Activated CD8-positive, alpha-beta T cell treated with anti-CD3 and anti-CD28 coated beads, Interleukin-2, amount 10 ng/mL, durations not matched to agents 7 days and 5 days (primary cell): ENCODE measurements at regions of chr17 and their contacts with region 1.

Region 1: GRCh38 chr17:37373530-37374159 is 2.1 kb upstream of the C17orf78 start:
- DNase-seq: peak; percentile 84
- ATAC-seq: peak; percentile 96
- H3K4me3 Mint-ChIP-seq: no peak overlapping the region
- H3K27ac Mint-ChIP-seq: no peak overlapping the region
- H3K4me1 Mint-ChIP-seq: peaks cover 12% of the 10 kb centered on the region
- H3K27me3 Mint-ChIP-seq: no peaks in the 10 kb centered on the region

Region 2: GRCh38 chr17:37255432-37255831 is 118.2 kb before region 1 on chr17:
- CTCF ChIA-PET with region 1: interaction called, 10 read pairs
- POLR2A ChIA-PET with region 1: no interaction called
- DNase-seq: no peak
- ATAC-seq: no peak
- H3K4me3 Mint-ChIP-seq: no peak overlapping the region
- H3K27ac Mint-ChIP-seq: no peak overlapping the region
- H3K4me1 Mint-ChIP-seq: no peaks in the 10 kb centered on the region
- H3K27me3 Mint-ChIP-seq: no peaks in the 10 kb centered on the region

Region 3: DNA sequence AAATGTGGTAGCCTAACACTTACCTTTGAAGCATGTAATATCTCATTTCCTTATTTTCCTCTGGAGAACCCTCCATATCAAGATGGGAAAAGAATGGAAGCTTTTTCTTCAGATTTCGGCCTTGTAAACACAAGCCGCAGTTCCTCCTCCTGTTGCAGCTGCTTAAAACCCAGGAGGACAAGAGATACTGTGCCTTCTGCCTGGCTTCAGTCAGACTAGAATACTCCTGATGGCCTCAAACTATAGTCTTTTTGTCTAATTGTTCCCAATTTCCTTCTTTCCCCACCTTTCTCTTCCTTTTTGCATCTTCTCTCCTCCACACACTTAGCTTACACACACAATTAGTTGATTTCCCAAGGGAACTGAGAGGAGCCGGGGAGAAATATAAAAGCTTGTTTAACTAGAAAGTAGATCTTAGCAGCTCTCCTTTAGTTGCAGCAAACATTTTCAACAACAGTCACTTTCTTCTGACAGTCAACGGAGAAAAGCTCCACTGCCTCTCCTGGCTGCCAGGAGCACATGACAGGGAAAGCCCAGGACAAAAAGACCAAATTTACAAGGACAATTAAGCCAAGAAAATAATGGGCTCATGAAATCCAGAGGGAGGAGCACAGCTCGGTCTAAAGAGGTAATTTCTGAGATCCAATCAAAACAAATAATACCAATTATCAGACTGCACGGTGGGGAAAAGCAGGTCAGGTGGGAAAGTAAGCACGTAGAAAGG is 74.2 kb before region 1 on chr17:
- CTCF ChIA-PET with region 1: no interaction called
- POLR2A ChIA-PET with region 1: no interaction called
- DNase-seq: no peak
- ATAC-seq: no peak
- H3K4me3 Mint-ChIP-seq: no peak overlapping the region
- H3K27ac Mint-ChIP-seq: no peak overlapping the region
- H3K4me1 Mint-ChIP-seq: peaks cover 9% of the 10 kb centered on the region
- H3K27me3 Mint-ChIP-seq: no peaks in the 10 kb centered on the region

Region 4: DNA sequence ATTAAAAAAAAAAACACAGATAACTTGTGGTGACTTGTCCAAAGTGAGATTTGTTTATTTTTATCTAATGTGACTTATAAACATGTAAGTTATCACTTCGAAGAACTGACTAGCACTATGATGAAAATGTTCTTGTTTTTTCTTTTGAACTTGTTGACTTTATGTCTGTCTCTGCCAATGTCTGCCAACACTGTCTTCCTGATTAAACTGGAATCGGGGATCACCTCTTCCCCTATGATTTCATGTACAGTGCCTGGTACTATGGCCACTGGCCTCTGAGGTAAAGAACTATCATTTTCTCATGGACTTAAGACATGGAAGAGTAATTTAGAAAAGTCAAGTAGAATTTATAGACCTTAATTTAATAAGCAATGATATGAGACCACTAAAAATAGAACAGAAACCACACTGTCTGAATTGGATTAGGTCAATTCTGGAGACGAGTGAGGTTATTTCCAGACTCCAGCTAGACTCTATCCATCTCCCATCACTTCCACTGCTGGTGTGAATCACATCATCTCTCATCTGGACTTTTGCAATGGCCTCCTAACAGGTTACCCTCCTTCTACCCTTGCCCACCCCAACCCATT is 11.0 kb after region 1 on chr17:
- CTCF ChIA-PET with region 1: interaction called, 85 read pairs
- POLR2A ChIA-PET with region 1: no interaction called
- DNase-seq: no peak
- ATAC-seq: no peak
- H3K4me3 Mint-ChIP-seq: no peak overlapping the region
- H3K27ac Mint-ChIP-seq: no peak overlapping the region
- H3K4me1 Mint-ChIP-seq: no peaks in the 10 kb centered on the region
- H3K27me3 Mint-ChIP-seq: no peaks in the 10 kb centered on the region

Region 5: GRCh38 chr17:37406635-37407461 is 33.2 kb after region 1 on chr17 and contains the starts of genes ACACA and TADA2A:
- CTCF ChIA-PET with region 1: interaction called, 22 read pairs
- POLR2A ChIA-PET with region 1: interaction called, 3 read pairs
- DNase-seq: peak; percentile 83
- ATAC-seq: peak; percentile 98
- H3K4me3 Mint-ChIP-seq: peak within 1 kb of the TSS; percentile 99
- H3K27ac Mint-ChIP-seq: peak within 1 kb of the TSS; percentile 97
- H3K4me1 Mint-ChIP-seq: peaks cover 56% of the 10 kb centered on the region
- H3K27me3 Mint-ChIP-seq: no peaks in the 10 kb centered on the region
- total RNA-seq, gene ACACA: 58.9 to 64.0 TPM
- total RNA-seq, gene TADA2A: 35.3 to 40.6 TPM

Region 6: DNA sequence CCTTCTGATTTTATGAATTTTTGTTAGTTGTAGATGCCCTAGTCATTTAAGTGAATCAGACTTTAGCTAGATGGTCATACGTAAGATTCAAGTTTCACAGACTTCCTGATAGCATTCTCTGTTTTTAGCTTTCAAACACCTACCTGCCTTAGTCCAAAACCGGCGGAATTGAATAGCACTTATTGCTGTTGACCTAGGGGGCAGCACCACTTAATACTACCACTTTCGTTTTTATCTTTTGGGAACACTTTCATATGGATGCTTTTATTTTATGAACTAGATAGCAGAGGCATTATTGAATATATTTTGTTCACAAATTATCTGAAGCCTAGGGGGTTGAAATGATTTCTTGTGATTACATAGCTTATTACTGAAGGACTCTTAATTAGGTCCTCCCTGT is 64.5 kb after region 1 on chr17:
- CTCF ChIA-PET with region 1: interaction called, 11 read pairs
- POLR2A ChIA-PET with region 1: no interaction called
- DNase-seq: no peak
- ATAC-seq: no peak
- H3K4me3 Mint-ChIP-seq: no peak overlapping the region
- H3K27ac Mint-ChIP-seq: no peak overlapping the region
- H3K4me1 Mint-ChIP-seq: peaks cover 6% of the 10 kb centered on the region
- H3K27me3 Mint-ChIP-seq: no peaks in the 10 kb centered on the region